Endothelial cell of umbilical vein (primary cell): ENCODE measurements at regions of chr18 and their contacts with region 1.

Region 1: DNA sequence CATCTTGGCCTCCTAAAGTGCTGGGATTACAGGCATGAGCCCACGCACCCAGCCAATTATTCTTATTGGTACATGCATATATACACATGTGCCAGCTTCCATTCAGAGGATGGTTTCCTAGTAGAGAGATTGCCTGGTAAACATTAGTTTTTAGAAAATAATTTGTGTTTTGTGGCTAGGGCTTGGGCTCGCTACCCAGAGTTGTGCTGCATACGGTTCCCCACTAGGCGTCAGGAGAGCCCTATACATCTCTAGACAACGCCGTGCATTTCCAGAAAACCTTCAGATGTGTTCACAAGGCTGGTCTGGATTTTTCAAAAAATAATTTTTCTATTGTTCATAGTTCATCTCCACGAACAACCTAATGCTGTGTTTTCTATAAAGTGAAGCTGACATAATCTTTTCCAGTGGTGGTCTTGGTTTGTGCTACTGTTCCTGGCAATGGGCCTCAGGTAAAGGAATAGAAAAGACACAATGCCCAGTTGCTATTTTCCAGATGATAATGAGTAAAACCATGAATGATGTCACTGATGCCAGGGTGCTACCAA is 14.7 kb upstream of the AFG3L2 start:
- DNase-seq: peak; percentile 73
- H3K4me3 ChIP-seq: no peak overlapping the region
- H3K27ac ChIP-seq: no peak overlapping the region
- H3K4me1 ChIP-seq: no peaks in the 10 kb centered on the region
- H3K27me3 ChIP-seq: no peaks in the 10 kb centered on the region
- CTCF ChIP-seq: peak; percentile 89 to 97
- POLR2A ChIP-seq: no peak

Region 2: DNA sequence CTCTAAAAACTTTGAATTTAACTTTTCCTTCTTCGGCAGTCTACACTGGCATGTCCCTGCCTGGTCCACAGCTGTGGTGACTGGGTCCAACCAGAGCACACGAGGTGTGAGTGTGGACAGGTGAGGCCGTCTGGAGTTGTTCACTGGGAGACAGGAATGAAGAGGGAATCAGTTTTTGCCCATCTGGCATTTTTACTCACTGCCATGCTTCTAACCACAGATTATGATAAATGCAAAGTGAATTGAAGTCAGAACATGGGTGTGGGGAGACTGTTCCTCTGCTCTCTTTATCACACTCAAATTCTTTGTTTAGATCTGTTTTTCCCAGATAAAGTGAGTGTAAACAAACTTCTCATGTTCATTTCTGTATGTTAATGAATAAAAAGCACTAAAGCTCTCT is 1187.7 kb before region 1 on chr18:
- CTCF ChIA-PET with region 1: no interaction called
- POLR2A ChIA-PET with region 1: no interaction called
- dilution Hi-C with region 1: no loop called
- intact Hi-C with region 1: no loop called
- DNase-seq: no peak
- H3K4me3 ChIP-seq: no peak overlapping the region
- H3K27ac ChIP-seq: no peak overlapping the region
- H3K4me1 ChIP-seq: no peaks in the 10 kb centered on the region
- H3K27me3 ChIP-seq: no peaks in the 10 kb centered on the region
- CTCF ChIP-seq: no peak
- POLR2A ChIP-seq: no peak

Region 3: GRCh38 chr18:12460874-12461273 is 69.2 kb after region 1 on chr18:
- CTCF ChIA-PET with region 1: interaction called, 11 read pairs
- POLR2A ChIA-PET with region 1: no interaction called
- dilution Hi-C with region 1: no loop called
- intact Hi-C with region 1: no loop called
- DNase-seq: peak; percentile 94
- H3K4me3 ChIP-seq: no peak overlapping the region
- H3K27ac ChIP-seq: peak overlapping the region; percentile 7
- H3K4me1 ChIP-seq: peaks cover 46% of the 10 kb centered on the region
- H3K27me3 ChIP-seq: no peaks in the 10 kb centered on the region
- CTCF ChIP-seq: no peak
- POLR2A ChIP-seq: no peak

Region 4: GRCh38 chr18:12679183-12679786 is 287.6 kb after region 1 on chr18:
- CTCF ChIA-PET with region 1: interaction called, 4 read pairs
- POLR2A ChIA-PET with region 1: no interaction called
- dilution Hi-C with region 1: no loop called
- intact Hi-C with region 1: loop called (anchors 1 kb)
- DNase-seq: peak; percentile 82
- H3K4me3 ChIP-seq: peak overlapping the region in 1 of 3 experiments; percentile 6
- H3K27ac ChIP-seq: peak overlapping the region; percentile 66
- H3K4me1 ChIP-seq: peaks cover 14% of the 10 kb centered on the region
- H3K27me3 ChIP-seq: no peaks in the 10 kb centered on the region
- CTCF ChIP-seq: no peak
- POLR2A ChIP-seq: peak; percentile 98

Region 5: GRCh38 chr18:12726774-12727550 is 335.3 kb after region 1 on chr18:
- CTCF ChIA-PET with region 1: interaction called, 3 read pairs
- POLR2A ChIA-PET with region 1: interaction called, 5 read pairs
- dilution Hi-C with region 1: no loop called
- intact Hi-C with region 1: loop called (anchors 1 kb)
- DNase-seq: peak; percentile 81
- H3K4me3 ChIP-seq: no peak overlapping the region
- H3K27ac ChIP-seq: no peak overlapping the region
- H3K4me1 ChIP-seq: no peaks in the 10 kb centered on the region
- H3K27me3 ChIP-seq: no peaks in the 10 kb centered on the region
- CTCF ChIP-seq: peak; percentile 76 to 80
- POLR2A ChIP-seq: no peak

Region 6: GRCh38 chr18:12934454-12935071 is 542.9 kb after region 1 on chr18:
- CTCF ChIA-PET with region 1: interaction called, 7 read pairs
- POLR2A ChIA-PET with region 1: no interaction called
- dilution Hi-C with region 1: no loop called
- intact Hi-C with region 1: loop called (anchors 2 kb)
- DNase-seq: peak; percentile 80
- H3K4me3 ChIP-seq: no peak overlapping the region
- H3K27ac ChIP-seq: no peak overlapping the region
- H3K4me1 ChIP-seq: no peaks in the 10 kb centered on the region
- H3K27me3 ChIP-seq: peaks cover 4 to 5% of the 10 kb centered on the region in 2 experiments
- CTCF ChIP-seq: peak; percentile 84 to 92
- POLR2A ChIP-seq: no peak